Activated T-helper 2 cell treated with anti-CD3 and anti-CD28 coated beads, Interferon-gamma antibody, Interleukin-2, Interleukin-4, amounts not matched to agents 10 μg/mL and 5 μg/mL and 100 μg/mL, durations not matched to agents 14 hours and 24 hours and 36 hours (primary cell): ENCODE measurements at regions of chr3 and their contacts with region 1.

Region 1: DNA sequence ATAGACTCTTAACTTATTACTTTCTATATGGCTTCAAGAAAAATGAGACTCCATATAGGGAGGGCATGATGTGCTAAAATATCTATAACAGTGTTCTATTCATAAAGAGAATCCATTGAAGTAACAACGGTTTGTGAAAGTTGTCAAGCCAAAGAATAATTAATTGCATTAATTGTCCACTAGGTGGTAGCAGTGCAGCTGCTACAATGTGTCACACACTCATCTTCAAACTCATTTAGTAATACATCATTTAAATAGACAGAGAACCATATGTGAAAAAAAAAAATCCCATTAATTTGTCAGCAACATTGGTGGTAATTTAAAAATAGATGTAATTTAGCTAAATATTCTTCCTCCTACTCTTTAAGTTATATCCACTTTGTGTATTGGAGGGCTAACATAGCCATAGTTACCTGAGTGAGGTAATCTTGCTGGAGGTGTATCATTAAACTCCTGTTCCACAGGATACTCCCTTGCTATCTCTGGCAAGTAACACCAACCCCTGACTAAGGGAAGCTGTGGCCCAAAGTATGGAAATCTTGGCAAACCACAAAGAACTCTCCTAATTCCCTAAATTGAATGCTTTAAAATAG is 3.7 kb upstream of the CPA3 start:
- DNase-seq: no peak
- H3K4me3 Mint-ChIP-seq: no peak overlapping the region
- H3K27ac Mint-ChIP-seq: no peak overlapping the region
- H3K4me1 Mint-ChIP-seq: peaks cover 2% of the 10 kb centered on the region
- H3K27me3 Mint-ChIP-seq: peaks cover 9% of the 10 kb centered on the region

Region 2: DNA sequence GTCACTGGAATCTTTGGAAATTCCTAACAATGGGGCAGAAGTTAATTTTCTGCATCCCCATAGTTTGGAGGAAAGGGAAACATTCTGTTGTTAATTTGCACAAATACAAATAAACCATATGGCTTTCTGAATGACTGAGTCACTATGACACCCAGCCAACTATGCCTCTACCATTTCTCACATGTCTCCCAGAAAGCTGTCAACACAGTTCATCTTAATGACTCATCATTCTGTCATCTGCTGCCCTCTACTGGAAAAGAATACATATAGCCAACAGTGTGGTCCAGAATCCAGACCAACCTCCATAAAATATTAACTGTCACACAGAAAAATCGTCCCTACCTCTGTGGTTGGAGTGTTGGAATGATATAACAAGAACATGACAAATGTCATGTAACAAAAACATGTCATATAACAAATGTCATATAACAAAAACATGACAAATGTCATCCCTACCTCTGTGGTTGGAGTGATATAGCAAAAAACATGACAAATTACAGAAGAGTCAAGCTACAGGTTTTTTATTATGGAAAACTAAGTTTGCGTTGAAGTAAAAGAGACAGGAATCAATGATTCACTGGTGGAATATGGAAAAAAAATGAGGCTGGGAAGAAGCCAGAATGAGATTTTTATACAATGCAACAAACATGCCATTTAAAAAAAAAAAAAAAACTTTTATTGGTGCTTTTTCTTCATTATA is 82.3 kb after region 1 on chr3:
- intact Hi-C with region 1: loop called (anchors 1 kb)
- DNase-seq: no peak
- H3K4me3 Mint-ChIP-seq: no peak overlapping the region
- H3K27ac Mint-ChIP-seq: no peak overlapping the region
- H3K4me1 Mint-ChIP-seq: peaks cover 1% of the 10 kb centered on the region
- H3K27me3 Mint-ChIP-seq: peaks cover 18% of the 10 kb centered on the region

Region 3: DNA sequence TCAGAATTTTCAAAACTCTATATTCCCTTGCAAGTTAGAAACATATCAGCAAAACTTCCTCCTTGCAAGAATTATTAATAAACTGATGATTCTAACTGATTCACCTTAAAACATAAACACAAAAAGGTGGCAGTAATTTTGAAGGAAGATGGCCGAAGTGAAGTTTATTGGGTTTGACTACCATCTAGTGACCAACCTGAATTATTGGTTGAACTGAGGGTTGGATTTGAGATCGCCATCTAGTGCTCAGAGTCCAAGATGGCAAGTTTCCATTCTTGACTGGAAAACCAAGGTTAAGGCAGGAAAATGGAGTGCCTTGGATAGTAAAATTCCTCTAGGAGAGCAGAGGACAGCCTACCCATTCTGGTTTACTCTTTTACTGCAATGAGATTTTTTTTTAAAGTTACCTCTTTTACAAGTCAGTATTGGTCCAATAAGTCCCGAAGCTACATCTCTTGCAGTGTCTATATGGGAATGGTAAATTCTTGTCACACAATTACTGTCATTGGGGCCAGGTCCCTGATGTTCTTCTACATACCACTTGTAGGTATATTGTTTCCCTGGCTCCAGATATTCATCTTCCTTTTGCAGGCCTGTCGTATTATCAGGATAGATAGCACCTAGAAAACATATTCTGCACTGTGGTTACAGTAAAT is 411.9 kb after region 1 on chr3:
- intact Hi-C with region 1: loop called (anchors 1 kb)
- DNase-seq: no peak
- H3K4me3 Mint-ChIP-seq: no peak overlapping the region
- H3K27ac Mint-ChIP-seq: no peak overlapping the region
- H3K4me1 Mint-ChIP-seq: peaks cover 20% of the 10 kb centered on the region
- H3K27me3 Mint-ChIP-seq: peaks cover 15% of the 10 kb centered on the region